ENCODE measurements at regions of chr10 and their contacts with region 1.

Region 1: DNA sequence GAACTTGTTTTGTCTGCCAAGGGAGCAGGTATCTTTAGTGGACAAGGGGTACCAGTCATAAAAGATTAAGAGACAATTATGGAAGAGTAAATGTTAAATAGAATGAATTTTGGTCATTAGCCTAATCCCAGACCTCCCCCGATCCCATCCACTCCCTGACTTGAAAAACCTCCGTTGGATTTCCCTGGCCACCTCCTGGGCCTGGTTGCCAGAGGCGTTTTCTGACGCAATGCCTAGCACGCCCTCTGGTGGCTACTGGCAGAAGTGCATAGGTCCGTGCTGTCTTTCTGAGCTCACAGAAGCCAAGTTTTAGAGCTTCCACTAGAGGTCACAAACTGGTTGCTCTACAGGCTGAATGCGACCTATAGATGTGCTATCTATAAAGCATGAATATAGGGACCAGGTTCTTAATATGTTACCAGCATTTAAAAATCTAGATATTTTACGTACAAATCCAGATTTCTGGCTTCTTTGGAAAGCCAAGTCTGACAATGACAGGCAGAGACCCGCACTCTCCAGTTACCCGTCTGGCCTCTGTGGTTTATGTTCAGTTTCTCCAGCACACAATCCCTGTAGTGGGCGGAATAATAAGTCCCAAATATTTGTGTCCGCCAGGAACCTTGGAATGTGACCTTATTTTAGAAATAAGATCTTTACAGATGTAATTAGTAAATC is 39.8 kb downstream of the SPOCK2 start:
- DNase-seq: peak; percentile 85 to 97
- H3K4me3 ChIP-seq: no peak overlapping the region
- H3K27ac ChIP-seq: no peak overlapping the region
- H3K4me1 ChIP-seq: peaks cover 0 to 2% (median 0%) of the 10 kb centered on the region in 4 experiments; a peak in 2 of 7 replicates
- H3K27me3 ChIP-seq: no peaks in the 10 kb centered on the region
- CTCF ChIP-seq: peak; percentile 94 to 100 (median 100)
- EP300 ChIP-seq: peak in 1 of 2 experiments; percentile 74; a peak in 1 of 3 replicates
- POLR2A ChIP-seq: no peak
- RAD21 ChIP-seq: peak; percentile 97 to 98

Region 2: GRCh38 chr10:71893920-71894319 is 154.7 kb before region 1 on chr10:
- CTCF ChIA-PET with region 1: interaction called, 65 read pairs
- POLR2A ChIA-PET with region 1: no interaction called
- DNase-seq: no peak
- H3K4me3 ChIP-seq: no peak overlapping the region
- H3K27ac ChIP-seq: no peak overlapping the region
- H3K4me1 ChIP-seq: no peaks in the 10 kb centered on the region
- H3K27me3 ChIP-seq: peaks cover 4 to 16% (median 12%) of the 10 kb centered on the region in 4 experiments
- CTCF ChIP-seq: no peak
- EP300 ChIP-seq: no peak
- POLR2A ChIP-seq: no peak
- RAD21 ChIP-seq: no peak

Region 3: GRCh38 chr10:71957546-71958275 is 90.9 kb before region 1 on chr10:
- CTCF ChIA-PET with region 1: interaction called, 51 read pairs
- POLR2A ChIA-PET with region 1: no interaction called
- DNase-seq: no peak
- H3K4me3 ChIP-seq: no peak overlapping the region
- H3K27ac ChIP-seq: no peak overlapping the region
- H3K4me1 ChIP-seq: no peaks in the 10 kb centered on the region
- H3K27me3 ChIP-seq: peaks cover 0 to 10% (median 5%) of the 10 kb centered on the region in 4 experiments; a peak in 6 of 7 replicates
- CTCF ChIP-seq: peak in 2 of 3 experiments; percentile 37 to 40; a peak in 2 of 4 replicates
- EP300 ChIP-seq: no peak
- POLR2A ChIP-seq: no peak
- RAD21 ChIP-seq: peak in 1 of 2 experiments; percentile 10; a peak in 1 of 4 replicates

Region 4: GRCh38 chr10:71974489-71975021 is 74.0 kb before region 1 on chr10:
- CTCF ChIA-PET with region 1: interaction called, 33 read pairs
- POLR2A ChIA-PET with region 1: no interaction called
- DNase-seq: no peak
- H3K4me3 ChIP-seq: no peak overlapping the region
- H3K27ac ChIP-seq: no peak overlapping the region
- H3K4me1 ChIP-seq: peaks cover 0 to 15% (median 4%) of the 10 kb centered on the region in 4 experiments; a peak in 4 of 7 replicates
- H3K27me3 ChIP-seq: no peaks in the 10 kb centered on the region
- CTCF ChIP-seq: no peak
- EP300 ChIP-seq: no peak
- POLR2A ChIP-seq: no peak
- RAD21 ChIP-seq: no peak

Region 5: DNA sequence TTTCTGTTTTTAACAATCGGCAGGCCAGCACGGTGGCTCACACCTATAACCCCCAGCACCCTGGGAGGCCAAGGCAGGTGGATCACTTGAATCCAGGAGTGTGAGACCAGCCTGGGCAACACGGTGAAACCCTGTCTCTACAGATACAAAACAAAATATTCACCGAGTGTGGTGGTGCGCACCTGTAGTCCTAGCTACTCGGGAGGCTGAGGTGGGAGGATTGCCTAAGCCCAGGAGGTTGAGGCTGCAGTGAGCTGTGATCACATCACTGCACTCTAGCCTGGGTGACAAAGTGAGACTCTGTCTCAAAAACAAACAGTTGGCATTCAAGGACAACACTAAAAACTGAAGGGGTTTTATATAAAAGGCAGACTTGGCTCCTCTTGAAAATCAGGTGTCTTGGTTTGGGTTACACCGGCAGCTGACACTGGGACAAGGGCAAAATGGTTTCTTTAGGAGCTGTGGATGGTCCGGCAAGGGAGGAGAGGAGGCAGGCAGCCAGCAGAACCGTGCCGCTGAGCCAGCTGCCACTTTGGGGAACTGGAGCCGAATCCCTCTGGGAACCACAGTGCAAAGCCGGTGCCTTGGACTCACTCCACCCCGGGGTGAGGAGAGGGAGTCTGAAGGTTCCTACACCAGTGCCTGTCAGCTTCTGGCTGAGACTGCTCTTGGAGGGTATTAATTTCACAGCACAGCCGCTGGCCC is 31.8 kb before region 1 on chr10:
- CTCF ChIA-PET with region 1: interaction called, 17 read pairs
- POLR2A ChIA-PET with region 1: no interaction called
- DNase-seq: no peak
- H3K4me3 ChIP-seq: no peak overlapping the region
- H3K27ac ChIP-seq: no peak overlapping the region
- H3K4me1 ChIP-seq: peaks cover 0 to 4% (median under 1%) of the 10 kb centered on the region in 4 experiments; a peak in 2 of 7 replicates
- H3K27me3 ChIP-seq: no peaks in the 10 kb centered on the region
- CTCF ChIP-seq: no peak
- EP300 ChIP-seq: no peak
- POLR2A ChIP-seq: no peak
- RAD21 ChIP-seq: no peak

Region 6: GRCh38 chr10:72038458-72039001 is 10.1 kb before region 1 on chr10:
- CTCF ChIA-PET with region 1: interaction called, 42 read pairs
- POLR2A ChIA-PET with region 1: no interaction called
- DNase-seq: no peak
- H3K4me3 ChIP-seq: no peak overlapping the region
- H3K27ac ChIP-seq: no peak overlapping the region
- H3K4me1 ChIP-seq: peaks cover 0 to 4% (median 4%) of the 10 kb centered on the region in 4 experiments; a peak in 3 of 7 replicates
- H3K27me3 ChIP-seq: peaks cover 0 to 2% (median 0%) of the 10 kb centered on the region in 4 experiments; a peak in 1 of 7 replicates
- CTCF ChIP-seq: no peak
- EP300 ChIP-seq: no peak
- POLR2A ChIP-seq: no peak
- RAD21 ChIP-seq: no peak

Region 7: GRCh38 chr10:72069751-72070526 is 21.4 kb after region 1 on chr10:
- CTCF ChIA-PET with region 1: interaction called, 100 read pairs
- POLR2A ChIA-PET with region 1: interaction called, 4 read pairs
- DNase-seq: peak in 1 of 2 experiments; percentile 67
- H3K4me3 ChIP-seq: no peak overlapping the region
- H3K27ac ChIP-seq: 0 out of 2 replicates have a peak overlapping the region, but pooled peaks have one; percentile 11
- H3K4me1 ChIP-seq: peaks cover 0 to 3% (median 0%) of the 10 kb centered on the region in 4 experiments; a peak in 2 of 7 replicates
- H3K27me3 ChIP-seq: no peaks in the 10 kb centered on the region
- CTCF ChIP-seq: peak; percentile 51 to 59 (median 59)
- EP300 ChIP-seq: no peak
- POLR2A ChIP-seq: no peak
- RAD21 ChIP-seq: peak; percentile 59 to 65